AG04450 (cell line): ENCODE measurements at regions of chr20 and their contacts with region 1.

Region 1: DNA sequence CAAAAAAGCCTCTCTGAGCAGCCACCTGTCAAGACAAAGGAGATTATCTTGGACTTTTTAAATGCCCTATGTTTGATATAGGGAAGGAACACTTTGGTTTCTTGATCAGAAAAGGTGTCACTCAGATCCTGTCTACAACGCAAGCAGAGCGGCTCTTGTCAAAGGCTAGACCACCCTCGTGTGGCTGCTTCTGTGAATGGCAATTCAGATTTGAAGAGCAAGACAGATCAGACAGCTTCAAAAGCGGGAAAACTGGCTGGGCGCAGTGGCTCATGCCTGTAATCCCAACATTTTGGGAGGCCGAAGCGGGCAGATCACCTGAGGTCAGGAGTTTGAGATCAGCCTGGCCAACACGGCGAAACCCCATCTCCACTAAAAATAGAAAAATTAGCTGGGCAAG is 10.1 kb upstream of the NXT1 start:
- DNase-seq: no peak
- H3K4me3 ChIP-seq: no peak overlapping the region
- H3K27ac ChIP-seq: no peak overlapping the region
- H3K27me3 ChIP-seq: peaks cover 2% of the 10 kb centered on the region
- CTCF ChIP-seq: peak; percentile 77

Region 2: DNA sequence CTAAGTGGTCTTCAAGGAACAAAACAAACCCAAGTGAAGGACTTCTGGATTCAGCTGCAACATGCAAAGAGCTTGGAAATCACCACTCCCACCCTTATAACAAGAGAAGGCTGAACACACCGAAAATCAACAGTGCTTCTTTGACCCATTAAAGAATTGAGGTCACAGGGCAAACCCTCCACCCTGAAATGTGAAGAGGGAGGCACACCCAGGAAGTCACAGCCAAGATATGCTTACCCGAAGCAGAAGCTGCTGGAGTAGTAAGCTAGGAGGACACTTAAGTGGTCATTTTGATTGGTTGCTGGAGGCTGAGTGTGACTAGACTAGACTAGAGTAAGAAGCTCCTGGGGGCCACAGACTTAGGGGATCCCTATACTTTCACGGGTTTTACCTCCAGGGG is 493.7 kb before region 1 on chr20:
- CTCF ChIA-PET with region 1: interaction called, 14 read pairs
- POLR2A ChIA-PET with region 1: no interaction called
- DNase-seq: no peak
- H3K4me3 ChIP-seq: no peak overlapping the region
- H3K27ac ChIP-seq: no peak overlapping the region
- H3K27me3 ChIP-seq: no peaks in the 10 kb centered on the region
- CTCF ChIP-seq: no peak

Region 3: DNA sequence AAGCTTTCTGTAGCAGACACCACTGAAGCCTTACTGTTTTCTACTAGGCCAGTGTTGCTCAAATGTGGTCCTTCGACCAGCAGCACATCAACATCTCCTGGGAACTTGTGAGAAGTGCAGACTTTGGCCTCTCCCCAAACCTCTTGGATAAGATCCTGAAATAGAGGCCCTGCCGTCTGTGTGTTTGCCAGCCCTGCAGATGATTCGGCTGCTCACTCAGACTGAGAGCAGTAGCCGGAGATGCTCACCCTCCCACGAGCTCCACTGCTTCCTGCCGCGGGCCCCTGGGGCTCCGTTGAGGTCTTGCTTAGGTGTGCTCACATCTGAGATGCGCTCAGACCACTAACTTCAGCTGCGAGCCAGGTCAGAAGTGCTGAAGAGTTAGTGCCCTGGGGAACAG is 434.9 kb before region 1 on chr20:
- CTCF ChIA-PET with region 1: interaction called, 11 read pairs
- POLR2A ChIA-PET with region 1: no interaction called
- DNase-seq: no peak
- H3K4me3 ChIP-seq: no peak overlapping the region
- H3K27ac ChIP-seq: no peak overlapping the region
- H3K27me3 ChIP-seq: no peaks in the 10 kb centered on the region
- CTCF ChIP-seq: no peak

Region 4: GRCh38 chr20:23937303-23938117 is 597.0 kb after region 1 on chr20:
- CTCF ChIA-PET with region 1: no interaction called
- POLR2A ChIA-PET with region 1: no interaction called
- DNase-seq: no peak
- H3K4me3 ChIP-seq: no peak overlapping the region
- H3K27ac ChIP-seq: no peak overlapping the region
- H3K27me3 ChIP-seq: no peaks in the 10 kb centered on the region
- CTCF ChIP-seq: peak; percentile 68